ENCODE measurements at regions of chr7 and their contacts with region 1.

Region 1: DNA sequence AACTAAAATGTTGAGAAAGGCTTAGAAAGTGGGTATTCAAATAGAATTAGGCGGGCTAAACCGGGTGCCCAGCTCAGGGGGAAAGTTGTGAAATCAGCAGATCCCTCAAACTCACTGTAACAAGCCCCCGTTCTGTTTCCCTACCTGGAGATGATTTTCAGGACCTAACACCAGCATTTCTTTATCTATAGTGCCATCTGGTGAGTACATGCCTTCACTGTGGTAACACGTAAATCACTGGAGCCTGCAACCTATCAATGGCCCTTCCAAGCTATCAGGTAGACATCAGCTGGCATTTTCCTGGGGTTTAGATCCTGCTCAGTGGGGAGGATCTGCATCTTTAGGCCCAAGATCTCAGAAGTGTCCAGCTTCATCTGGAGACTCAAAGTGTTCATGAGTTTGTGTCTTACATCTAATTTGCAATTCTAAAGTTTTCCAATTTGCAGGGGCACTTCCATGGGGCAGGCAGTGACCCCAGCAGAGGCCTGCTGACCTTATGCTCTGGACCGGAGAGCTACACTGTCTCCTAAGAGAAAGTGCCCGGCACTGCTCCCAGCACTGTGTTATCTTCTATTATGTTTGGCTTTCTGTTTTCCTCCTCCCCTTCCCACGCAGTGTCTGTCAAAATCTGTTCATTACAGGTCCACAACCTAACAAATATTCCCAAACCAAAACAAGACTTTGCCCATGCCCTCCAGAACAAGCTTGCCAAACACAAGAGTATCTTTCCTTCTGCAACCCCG is 132.5 kb downstream of the LSM5 start:
- DNase-seq: peak; percentile 22 to 25
- ATAC-seq: peak; percentile 72 to 73; a peak in 5 of 6 replicates
- H3K4me3 ChIP-seq: no peak overlapping the region
- H3K27ac ChIP-seq: no peak overlapping the region
- H3K4me1 ChIP-seq: no peaks in the 10 kb centered on the region
- CTCF ChIP-seq: peak; percentile 41
- EP300 ChIP-seq: no peak
- POLR2A ChIP-seq: no peak
- RAD21 ChIP-seq: peak; percentile 58 to 59

Region 2: DNA sequence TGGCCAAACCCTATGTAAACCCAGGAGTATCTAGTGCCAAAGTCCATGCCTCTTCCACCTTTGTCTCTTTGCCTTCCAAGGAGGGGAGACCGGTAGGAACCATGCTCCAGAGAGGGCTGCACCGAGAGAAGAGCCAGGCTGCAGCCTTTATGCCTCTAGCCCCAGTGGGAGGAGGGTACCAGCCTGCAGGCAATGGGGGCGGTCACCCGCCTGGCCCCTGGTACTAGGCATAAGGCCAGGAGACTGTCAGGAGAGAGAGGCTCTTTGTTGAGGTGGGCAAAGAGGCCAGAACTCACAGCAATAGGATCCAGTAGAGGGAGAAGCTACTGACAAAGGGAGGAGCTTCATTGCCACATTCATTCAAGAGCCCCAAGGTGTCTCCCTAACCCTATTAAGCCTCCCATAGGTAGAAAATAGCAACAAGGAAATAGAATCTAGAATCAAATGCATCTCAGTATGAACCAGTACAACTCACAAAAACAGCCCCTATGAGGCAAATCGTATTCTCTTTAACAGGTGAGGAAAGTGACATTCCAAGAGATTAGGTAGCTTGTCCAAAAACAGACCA is 140.9 kb before region 1 on chr7:
- CTCF ChIA-PET with region 1: interaction called, 76 read pairs
- POLR2A ChIA-PET with region 1: no interaction called
- DNase-seq: no peak
- ATAC-seq: no peak
- H3K4me3 ChIP-seq: no peak overlapping the region
- H3K27ac ChIP-seq: no peak overlapping the region
- H3K4me1 ChIP-seq: no peaks in the 10 kb centered on the region
- CTCF ChIP-seq: no peak
- EP300 ChIP-seq: no peak
- POLR2A ChIP-seq: no peak
- RAD21 ChIP-seq: no peak

Region 3: DNA sequence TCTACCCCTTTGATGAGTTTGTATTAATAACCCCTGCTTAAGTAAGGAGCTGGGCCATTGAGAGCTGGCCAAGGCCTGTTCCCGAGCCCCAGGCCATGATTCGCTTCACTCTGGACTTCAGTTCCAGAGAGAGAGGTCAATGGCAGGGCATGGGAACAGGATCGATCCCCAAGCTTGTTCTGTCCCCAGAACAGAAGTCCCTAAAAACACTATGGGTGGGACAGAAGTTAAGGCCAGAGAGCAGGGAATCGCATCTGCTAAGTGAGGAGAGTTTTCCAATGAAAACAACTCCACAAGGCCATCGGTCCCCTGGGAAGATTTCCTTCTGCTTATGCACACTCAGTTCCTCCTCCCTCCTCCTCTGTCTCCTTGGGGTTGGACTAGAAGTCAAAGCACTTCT is 27.1 kb before region 1 on chr7:
- CTCF ChIA-PET with region 1: no interaction called
- POLR2A ChIA-PET with region 1: no interaction called
- DNase-seq: no peak
- ATAC-seq: no peak
- H3K4me3 ChIP-seq: no peak overlapping the region
- H3K27ac ChIP-seq: no peak overlapping the region
- H3K4me1 ChIP-seq: no peaks in the 10 kb centered on the region
- CTCF ChIP-seq: no peak
- EP300 ChIP-seq: no peak
- POLR2A ChIP-seq: no peak
- RAD21 ChIP-seq: no peak

Region 4: GRCh38 chr7:32347244-32347828 is 10.4 kb before region 1 on chr7:
- CTCF ChIA-PET with region 1: interaction called, 11 read pairs
- POLR2A ChIA-PET with region 1: no interaction called
- DNase-seq: peak; percentile 15 to 19
- ATAC-seq: 0 out of 6 replicates have a peak, but pooled peaks of 1 of the 2 experiments have one; percentile 40
- H3K4me3 ChIP-seq: no peak overlapping the region
- H3K27ac ChIP-seq: no peak overlapping the region
- H3K4me1 ChIP-seq: no peaks in the 10 kb centered on the region
- CTCF ChIP-seq: peak; percentile 68
- EP300 ChIP-seq: no peak
- POLR2A ChIP-seq: no peak
- RAD21 ChIP-seq: peak; percentile 34 to 50; a peak in 3 of 5 replicates

Region 5: DNA sequence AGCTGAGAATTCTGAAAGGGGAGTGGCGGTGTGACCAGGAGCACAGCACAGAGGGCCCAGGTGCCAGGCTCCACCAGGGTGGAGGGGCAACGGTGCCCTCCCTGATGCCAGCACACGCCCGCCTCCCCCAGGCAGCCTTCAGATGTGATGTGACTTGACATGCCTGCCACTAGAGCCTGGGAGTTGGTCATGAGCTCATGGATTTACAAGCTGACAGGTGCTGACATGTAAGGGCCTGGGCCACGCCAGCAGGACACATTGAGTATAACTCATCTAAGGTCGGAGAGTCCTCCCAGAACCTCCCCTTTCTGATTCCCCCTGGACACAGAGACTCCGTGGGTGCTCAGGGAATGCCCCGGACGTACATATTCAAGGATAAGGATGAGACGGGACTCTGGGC is 58.2 kb after region 1 on chr7:
- CTCF ChIA-PET with region 1: no interaction called
- POLR2A ChIA-PET with region 1: no interaction called
- DNase-seq: no peak
- ATAC-seq: 0 out of 6 replicates have a peak, but pooled peaks of 1 of the 2 experiments have one; percentile 19
- H3K4me3 ChIP-seq: no peak overlapping the region
- H3K27ac ChIP-seq: no peak overlapping the region
- H3K4me1 ChIP-seq: no peaks in the 10 kb centered on the region
- CTCF ChIP-seq: no peak
- EP300 ChIP-seq: no peak
- POLR2A ChIP-seq: no peak
- RAD21 ChIP-seq: no peak